HepG2 (cell line): ENCODE measurements at regions of chr6 and their contacts with region 1.

Region 1: GRCh38 chr6:52640170-52640569 is 30.7 kb upstream of the TMEM14A start:
- DNase-seq: peak; percentile 73
- ATAC-seq: peak; percentile 99
- H3K4me3 ChIP-seq: peak overlapping the region in 2 of 3 experiments; percentile 25 to 36; a peak in 2 of 6 replicates
- H3K27ac ChIP-seq: no peak overlapping the region
- H3K4me1 ChIP-seq: peaks cover 39% of the 10 kb centered on the region
- H3K27me3 ChIP-seq: peaks cover 0 to 20% of the 10 kb centered on the region in 2 experiments; a peak in 3 of 5 replicates
- CTCF ChIP-seq: no peak; the same call in 1 of the 2 replicates
- EP300 ChIP-seq: no peak; a peak in 1 of 4 replicates
- POLR2A ChIP-seq: no peak
- RAD21 ChIP-seq: no peak

Region 2: DNA sequence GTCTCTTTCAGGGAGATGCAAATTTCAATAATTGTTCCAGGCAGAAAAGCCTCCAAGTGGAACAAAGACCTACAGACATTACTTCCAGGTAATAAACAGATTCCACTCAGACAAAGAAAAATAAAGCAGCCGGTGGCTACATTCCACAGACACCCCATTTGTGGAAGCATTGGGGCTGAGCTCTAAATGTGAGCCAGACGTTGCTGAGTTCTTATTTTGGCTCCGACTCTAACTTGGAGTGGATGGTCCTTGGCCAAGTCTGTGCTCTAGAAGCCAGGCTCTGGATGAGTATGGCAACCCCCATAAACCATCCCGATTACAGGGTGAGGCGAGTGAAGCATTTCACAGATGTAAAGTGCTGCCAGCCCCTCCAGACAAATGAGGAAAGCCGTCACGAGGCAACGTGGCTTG is 69.9 kb before region 1 on chr6:
- CTCF ChIA-PET with region 1: no interaction called
- POLR2A ChIA-PET with region 1: no interaction called
- in situ Hi-C with region 1: no loop called
- intact Hi-C with region 1: no loop called
- DNase-seq: no peak
- ATAC-seq: no peak
- H3K4me3 ChIP-seq: no peak overlapping the region
- H3K27ac ChIP-seq: no peak overlapping the region
- H3K4me1 ChIP-seq: peaks cover 100% of the 10 kb centered on the region
- H3K27me3 ChIP-seq: no peaks in the 10 kb centered on the region; a peak in 1 of 5 replicates
- CTCF ChIP-seq: no peak
- EP300 ChIP-seq: no peak
- POLR2A ChIP-seq: no peak
- RAD21 ChIP-seq: no peak

Region 3: DNA sequence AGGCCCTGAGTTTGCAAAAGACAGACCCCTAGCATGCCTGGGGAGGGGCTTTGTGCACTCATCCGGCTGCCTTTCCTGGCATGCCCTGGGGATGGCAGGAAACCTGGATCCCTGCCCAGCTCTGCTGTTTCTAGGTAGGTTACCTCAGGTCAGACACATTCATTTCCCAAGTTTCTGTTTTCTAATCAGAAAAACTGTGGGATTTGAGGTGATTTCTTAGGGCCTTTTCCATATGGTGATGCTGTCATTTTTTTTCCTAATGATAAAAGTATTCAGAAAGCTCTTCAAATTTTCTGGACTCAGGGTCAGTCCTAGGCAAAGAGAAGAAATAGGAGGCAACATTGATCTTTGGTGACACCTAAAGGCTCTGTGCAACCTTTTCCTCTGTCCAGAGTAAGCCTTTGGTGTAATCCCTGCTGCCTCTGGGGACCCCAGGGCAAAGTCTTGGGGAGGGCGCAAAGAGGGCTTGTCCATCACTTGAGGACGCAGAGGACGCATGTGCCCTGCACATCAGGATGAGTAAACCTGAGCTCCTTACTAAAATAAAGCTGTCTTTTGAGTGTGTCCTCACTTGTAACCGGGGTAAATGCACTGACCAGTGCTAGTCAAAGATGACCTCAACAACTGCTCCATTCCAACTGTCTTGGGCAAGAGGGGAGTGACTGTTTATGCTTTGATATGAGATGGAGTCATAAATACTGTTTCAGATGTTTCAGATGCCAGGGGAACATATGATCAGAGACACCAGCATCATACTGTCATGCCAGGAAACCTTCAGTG is 49.8 kb before region 1 on chr6:
- CTCF ChIA-PET with region 1: no interaction called
- POLR2A ChIA-PET with region 1: interaction called, 3 read pairs
- in situ Hi-C with region 1: no loop called
- intact Hi-C with region 1: loop called (anchors 1 kb)
- DNase-seq: peak; percentile 77
- ATAC-seq: peak; percentile 62
- H3K4me3 ChIP-seq: peak overlapping the region in 1 of 3 experiments; percentile 33; a peak in 2 of 6 replicates
- H3K27ac ChIP-seq: peak overlapping the region; percentile 93
- H3K4me1 ChIP-seq: peaks cover 71% of the 10 kb centered on the region
- H3K27me3 ChIP-seq: no peaks in the 10 kb centered on the region
- CTCF ChIP-seq: peak; percentile 86
- EP300 ChIP-seq: peak in 1 of 2 experiments; percentile 29; a peak in 2 of 4 replicates
- POLR2A ChIP-seq: no peak
- RAD21 ChIP-seq: peak; percentile 78

Region 4: DNA sequence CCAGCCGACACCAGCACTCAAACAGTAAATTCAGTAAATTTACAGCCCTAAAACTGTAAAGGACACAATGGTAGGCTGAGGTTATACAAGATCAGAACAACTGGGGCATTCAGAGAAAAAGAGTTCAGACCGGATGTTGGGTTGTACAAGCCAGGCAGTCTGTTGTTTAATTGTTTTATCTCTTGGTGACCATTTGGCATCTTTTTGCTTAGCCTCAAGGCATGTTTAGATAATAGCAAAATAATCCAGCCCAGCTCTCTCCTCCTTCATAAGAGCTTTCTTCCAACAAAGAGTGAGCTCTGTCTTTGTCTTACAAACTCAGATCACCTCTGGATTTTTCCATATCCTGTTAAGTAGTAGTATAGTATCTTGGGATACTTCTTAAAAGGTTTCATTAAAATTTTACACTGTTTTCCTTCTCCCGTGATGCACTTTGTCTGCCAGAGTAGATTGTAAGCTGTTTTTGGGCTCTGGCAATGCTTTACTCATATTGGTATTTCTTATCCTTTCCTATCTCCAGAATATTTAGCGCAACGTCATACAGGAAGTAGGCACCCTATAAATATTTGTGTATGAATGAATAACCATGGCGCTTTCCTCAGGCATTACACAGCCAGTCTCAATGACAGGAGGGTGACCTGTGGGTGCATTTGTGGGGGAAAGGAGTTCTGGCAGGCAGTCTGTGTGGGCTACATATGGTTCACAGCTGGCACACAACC is 27.7 kb before region 1 on chr6:
- CTCF ChIA-PET with region 1: no interaction called
- POLR2A ChIA-PET with region 1: no interaction called
- in situ Hi-C with region 1: no loop called
- intact Hi-C with region 1: loop called (anchors 2 kb)
- DNase-seq: no peak
- ATAC-seq: no peak
- H3K4me3 ChIP-seq: no peak overlapping the region
- H3K27ac ChIP-seq: no peak overlapping the region
- H3K4me1 ChIP-seq: peaks cover 39% of the 10 kb centered on the region
- H3K27me3 ChIP-seq: no peaks in the 10 kb centered on the region
- CTCF ChIP-seq: no peak
- EP300 ChIP-seq: no peak
- POLR2A ChIP-seq: no peak
- RAD21 ChIP-seq: no peak